Activated CD4-positive, alpha-beta T cell treated with anti-CD3 and anti-CD28 coated beads for 36 hours (primary cell): ENCODE measurements at regions of chr2 and their contacts with region 1.

Region 1: DNA sequence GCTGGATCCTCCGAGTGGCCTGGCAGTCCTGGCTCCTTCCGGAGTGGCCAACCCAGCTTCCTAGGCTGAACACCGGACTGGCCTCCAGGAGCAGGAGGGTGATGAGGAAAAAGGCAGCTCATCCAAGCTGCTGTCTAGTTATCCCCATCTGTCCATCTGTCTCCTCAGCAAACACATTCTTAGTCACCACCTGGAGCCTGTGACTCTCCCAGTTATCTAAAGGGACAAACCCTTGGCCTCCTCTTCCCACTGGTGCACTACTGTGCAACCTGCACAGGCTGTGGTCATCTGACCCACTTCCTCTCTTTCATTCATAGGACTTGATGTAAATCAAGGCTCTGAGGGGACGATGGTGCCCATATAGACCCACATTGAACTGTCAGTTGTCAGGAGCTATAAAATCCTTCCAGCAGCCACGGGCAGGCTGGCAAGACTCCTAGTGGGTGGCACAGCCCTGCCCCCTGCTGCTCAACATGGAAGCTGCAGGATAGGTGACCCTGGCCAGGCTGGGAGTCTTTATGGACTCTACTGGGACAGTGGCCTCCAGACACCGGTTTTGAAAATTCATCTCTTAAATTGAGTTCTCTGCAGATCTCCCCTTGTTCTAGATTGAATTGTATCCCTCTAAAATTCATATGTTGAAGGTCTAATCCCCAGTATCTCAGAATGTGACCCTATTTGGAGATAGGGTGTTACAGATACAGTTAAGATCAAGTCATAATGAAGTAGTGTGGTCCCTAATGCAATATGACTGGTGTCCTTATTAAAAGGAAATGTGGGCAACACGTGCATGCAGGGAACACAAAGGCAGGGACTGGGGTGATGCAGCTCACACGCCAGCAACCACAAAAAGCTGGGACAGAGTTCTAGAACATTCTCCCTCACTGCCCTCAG is 29.3 kb upstream of the DUSP2 start:
- DNase-seq: peak; percentile 92
- ATAC-seq: peak; percentile 96
- H3K4me3 Mint-ChIP-seq: peak overlapping the region; percentile 60
- H3K27ac Mint-ChIP-seq: peak overlapping the region; percentile 88
- H3K4me1 Mint-ChIP-seq: peaks cover 22% of the 10 kb centered on the region
- H3K27me3 Mint-ChIP-seq: no peaks in the 10 kb centered on the region

Region 2: GRCh38 chr2:96024336-96025193 is 149.9 kb before region 1 on chr2:
- CTCF ChIA-PET with region 1: interaction called, 16 read pairs
- POLR2A ChIA-PET with region 1: no interaction called
- intact Hi-C with region 1: loop called in 1 of 2 experiments (anchors 10 kb)
- DNase-seq: peak; percentile 6
- ATAC-seq: no peak
- H3K4me3 Mint-ChIP-seq: no peak overlapping the region
- H3K27ac Mint-ChIP-seq: no peak overlapping the region
- H3K4me1 Mint-ChIP-seq: peaks cover 2% of the 10 kb centered on the region
- H3K27me3 Mint-ChIP-seq: no peaks in the 10 kb centered on the region

Region 3: GRCh38 chr2:96116879-96117697 is 57.4 kb before region 1 on chr2:
- CTCF ChIA-PET with region 1: interaction called, 20 read pairs
- POLR2A ChIA-PET with region 1: interaction called, 3 read pairs
- intact Hi-C with region 1: loop called in 1 of 2 experiments (anchors 1 kb)
- DNase-seq: peak; percentile 80
- ATAC-seq: peak; percentile 87
- H3K4me3 Mint-ChIP-seq: peak overlapping the region; percentile 55
- H3K27ac Mint-ChIP-seq: no peak overlapping the region
- H3K4me1 Mint-ChIP-seq: peaks cover 10% of the 10 kb centered on the region
- H3K27me3 Mint-ChIP-seq: peaks cover 36% of the 10 kb centered on the region

Region 4: GRCh38 chr2:96138179-96139145 is 36.0 kb before region 1 on chr2 and contains the start of gene ASTL:
- CTCF ChIA-PET with region 1: interaction called, 347 read pairs
- POLR2A ChIA-PET with region 1: interaction called, 136 read pairs
- intact Hi-C with region 1: loop called (anchors 1 kb)
- DNase-seq: peak; percentile 82
- ATAC-seq: peak; percentile 33
- H3K4me3 Mint-ChIP-seq: no peak within 1 kb of the TSS
- H3K27ac Mint-ChIP-seq: no peak within 1 kb of the TSS
- H3K4me1 Mint-ChIP-seq: peaks cover 28% of the 10 kb centered on the region
- H3K27me3 Mint-ChIP-seq: no peaks in the 10 kb centered on the region
- total RNA-seq, gene ASTL: 2.5 to 2.8 TPM

Region 5: DNA sequence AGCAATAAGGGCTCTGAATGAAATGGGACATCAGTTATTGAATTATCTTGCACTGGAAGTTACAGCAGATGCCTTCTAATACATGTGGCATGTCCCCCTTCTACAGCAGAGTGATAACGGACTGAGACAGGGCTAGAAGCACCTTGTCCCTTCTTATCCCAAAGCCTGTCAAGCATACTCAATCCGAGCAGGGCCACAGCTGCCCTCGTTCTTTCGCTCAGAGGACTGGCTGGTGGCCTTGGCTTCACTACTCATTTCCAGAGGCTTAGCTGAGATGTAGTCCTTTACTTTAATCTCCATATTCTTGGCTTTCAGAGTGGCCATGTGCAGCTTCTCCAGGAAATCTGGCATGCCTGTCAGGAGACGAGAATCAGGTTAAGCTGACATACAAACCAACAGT is 12.1 kb after region 1 on chr2:
- CTCF ChIA-PET with region 1: interaction called, 11 read pairs
- POLR2A ChIA-PET with region 1: no interaction called
- intact Hi-C with region 1: no loop called
- DNase-seq: no peak
- ATAC-seq: no peak
- H3K4me3 Mint-ChIP-seq: no peak overlapping the region
- H3K27ac Mint-ChIP-seq: no peak overlapping the region
- H3K4me1 Mint-ChIP-seq: no peaks in the 10 kb centered on the region
- H3K27me3 Mint-ChIP-seq: no peaks in the 10 kb centered on the region